ENCODE measurements at regions of chr2 and their contacts with region 1.

Region 1: DNA sequence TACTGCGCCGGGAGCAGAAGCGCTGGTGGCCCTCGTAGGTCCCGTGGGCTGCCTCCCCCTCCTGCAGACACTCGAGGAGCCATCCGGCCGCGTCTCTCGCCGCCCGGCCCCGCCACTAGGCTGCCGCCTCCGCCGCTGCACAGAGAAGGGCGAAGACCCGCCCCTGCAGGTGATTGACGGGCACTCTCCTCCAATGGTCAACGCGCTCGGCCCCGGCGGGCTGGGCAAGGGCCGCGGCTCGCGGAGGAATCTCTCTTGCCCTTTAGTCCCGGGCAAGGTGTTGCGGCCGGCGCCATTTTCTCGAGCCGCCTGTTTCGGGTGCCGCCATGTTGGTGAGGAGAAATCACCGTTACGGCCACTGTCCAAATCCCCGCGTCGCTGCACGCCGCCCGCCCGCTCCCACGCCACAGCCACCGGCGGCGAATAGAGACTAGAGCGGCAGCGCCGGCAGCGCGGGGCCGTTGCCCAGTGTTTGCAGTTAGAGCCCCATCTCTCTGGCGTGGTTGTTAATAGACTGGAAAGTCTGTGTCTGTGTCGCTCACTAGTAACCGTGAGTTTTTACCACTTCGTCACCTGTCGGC is at the start of gene ZC3H6:
- DNase-seq: peak; percentile 85
- ATAC-seq: peak; percentile 97
- H3K4me3 ChIP-seq: peak within 1 kb of the TSS; percentile 99
- H3K27ac ChIP-seq: peak within 1 kb of the TSS; percentile 94
- H3K4me1 ChIP-seq: no peaks in the 10 kb centered on the region
- H3K27me3 ChIP-seq: no peaks in the 10 kb centered on the region
- CTCF ChIP-seq: peak in 1 of 3 experiments; percentile 1; a peak in 1 of 6 replicates
- EP300 ChIP-seq: no peak
- POLR2A ChIP-seq: peak; percentile 95
- RAD21 ChIP-seq: no peak
- polyA plus RNA-seq, gene ZC3H6: 0.53 to 1.2 TPM

Region 2: GRCh38 chr2:111958901-111959300 is 316.5 kb before region 1 on chr2:
- CTCF ChIA-PET with region 1: no interaction called
- POLR2A ChIA-PET with region 1: no interaction called
- RAD21 ChIA-PET with region 1: no interaction called
- SMC1A ChIA-PET with region 1: no interaction called
- in situ Hi-C with region 1: no loop called
- intact Hi-C with region 1: no loop called
- DNase-seq: no peak
- ATAC-seq: no peak
- H3K4me3 ChIP-seq: no peak overlapping the region
- H3K27ac ChIP-seq: no peak overlapping the region
- H3K4me1 ChIP-seq: no peaks in the 10 kb centered on the region
- H3K27me3 ChIP-seq: no peaks in the 10 kb centered on the region; a peak in 1 of 4 replicates
- CTCF ChIP-seq: no peak
- EP300 ChIP-seq: no peak
- POLR2A ChIP-seq: no peak
- RAD21 ChIP-seq: no peak

Region 3: GRCh38 chr2:112187805-112188596 is 87.4 kb before region 1 on chr2:
- CTCF ChIA-PET with region 1: no interaction called
- POLR2A ChIA-PET with region 1: no interaction called
- RAD21 ChIA-PET with region 1: no interaction called
- SMC1A ChIA-PET with region 1: no interaction called
- in situ Hi-C with region 1: no loop called
- intact Hi-C with region 1: no loop called
- DNase-seq: no peak
- ATAC-seq: peak; percentile 48
- H3K4me3 ChIP-seq: no peak overlapping the region
- H3K27ac ChIP-seq: no peak overlapping the region
- H3K4me1 ChIP-seq: peaks cover 8% of the 10 kb centered on the region
- H3K27me3 ChIP-seq: no peaks in the 10 kb centered on the region; a peak in 2 of 4 replicates
- CTCF ChIP-seq: no peak
- EP300 ChIP-seq: no peak
- POLR2A ChIP-seq: no peak
- RAD21 ChIP-seq: no peak

Region 4: GRCh38 chr2:112259509-112260294 is 15.7 kb before region 1 on chr2:
- CTCF ChIA-PET with region 1: interaction called, 39 read pairs
- POLR2A ChIA-PET with region 1: interaction called, 4 read pairs
- RAD21 ChIA-PET with region 1: interaction called, 4 read pairs
- SMC1A ChIA-PET with region 1: interaction called, 6 read pairs
- in situ Hi-C with region 1: no loop called
- intact Hi-C with region 1: loop called (anchors 1 kb)
- DNase-seq: peak; percentile 35
- ATAC-seq: peak; percentile 70
- H3K4me3 ChIP-seq: no peak overlapping the region
- H3K27ac ChIP-seq: no peak overlapping the region
- H3K4me1 ChIP-seq: peaks cover 3% of the 10 kb centered on the region; the same call in 1 of the 2 replicates
- H3K27me3 ChIP-seq: no peaks in the 10 kb centered on the region
- CTCF ChIP-seq: peak; percentile 94 to 99 (median 99)
- EP300 ChIP-seq: no peak
- POLR2A ChIP-seq: 0 out of 2 replicates have a peak, but pooled peaks have one; percentile 27
- RAD21 ChIP-seq: peak; percentile 88

Region 5: DNA sequence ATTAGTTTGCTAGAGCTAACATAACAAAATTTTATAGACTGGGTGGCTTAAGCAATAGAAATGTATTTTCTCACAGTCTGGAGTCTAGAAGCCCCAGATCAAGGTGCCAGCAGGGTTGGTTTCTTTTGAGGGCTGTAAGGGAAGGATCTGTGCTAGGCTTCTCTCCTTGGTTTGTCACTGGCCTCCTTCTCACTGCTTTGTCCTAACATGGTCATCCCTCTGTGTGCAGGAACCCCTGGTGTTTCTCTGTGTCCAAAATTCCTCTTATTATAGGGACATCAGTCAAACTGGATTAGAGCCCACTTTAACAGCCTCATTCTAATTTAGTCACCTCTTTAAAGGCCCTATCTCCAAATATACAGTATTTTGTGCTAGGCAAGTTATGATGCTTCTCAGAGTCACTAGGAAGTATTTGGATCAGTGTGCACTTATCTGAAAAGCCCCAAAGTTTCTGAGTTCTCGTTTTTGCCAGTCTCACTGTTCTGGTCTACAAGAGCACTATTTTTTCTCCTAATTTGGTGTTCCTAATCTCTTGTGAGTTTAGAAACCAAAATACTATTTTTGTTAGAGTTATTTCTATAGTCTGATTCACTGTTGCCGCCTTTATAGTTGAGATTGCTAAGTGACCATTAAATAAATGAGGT is 29.0 kb after region 1 on chr2:
- CTCF ChIA-PET with region 1: no interaction called
- POLR2A ChIA-PET with region 1: no interaction called
- RAD21 ChIA-PET with region 1: no interaction called
- SMC1A ChIA-PET with region 1: no interaction called
- in situ Hi-C with region 1: no loop called
- intact Hi-C with region 1: loop called (anchors 2 kb)
- DNase-seq: peak; percentile 15
- ATAC-seq: peak; percentile 89
- H3K4me3 ChIP-seq: no peak overlapping the region
- H3K27ac ChIP-seq: peak overlapping the region; percentile 38; the same call in 1 of the 2 replicates
- H3K4me1 ChIP-seq: no peaks in the 10 kb centered on the region
- H3K27me3 ChIP-seq: no peaks in the 10 kb centered on the region
- CTCF ChIP-seq: no peak
- EP300 ChIP-seq: no peak
- POLR2A ChIP-seq: no peak
- RAD21 ChIP-seq: no peak

Region 6: DNA sequence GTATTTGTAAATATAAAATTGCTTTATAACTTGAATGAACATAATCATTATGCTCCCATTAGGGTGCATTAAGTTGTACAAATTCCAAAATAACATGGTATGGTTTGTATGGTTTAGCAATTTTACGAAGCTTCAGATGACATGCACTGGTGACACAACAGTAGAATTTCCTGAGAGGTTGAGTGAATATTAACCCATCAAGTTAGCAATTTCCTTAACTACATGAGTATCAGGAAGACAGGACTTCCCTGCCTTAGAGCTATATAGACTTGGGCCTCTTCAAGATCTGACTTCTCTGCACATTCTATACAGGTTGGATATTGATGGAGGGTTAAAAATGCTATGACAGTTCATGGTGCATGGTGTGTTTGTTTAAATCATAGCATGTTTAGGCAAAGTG is 60.2 kb after region 1 on chr2:
- CTCF ChIA-PET with region 1: no interaction called
- POLR2A ChIA-PET with region 1: no interaction called
- RAD21 ChIA-PET with region 1: no interaction called
- SMC1A ChIA-PET with region 1: no interaction called
- in situ Hi-C with region 1: no loop called
- intact Hi-C with region 1: no loop called
- DNase-seq: no peak
- ATAC-seq: no peak
- H3K4me3 ChIP-seq: no peak overlapping the region
- H3K27ac ChIP-seq: no peak overlapping the region
- H3K4me1 ChIP-seq: no peaks in the 10 kb centered on the region
- H3K27me3 ChIP-seq: no peaks in the 10 kb centered on the region
- CTCF ChIP-seq: no peak
- EP300 ChIP-seq: no peak
- POLR2A ChIP-seq: no peak
- RAD21 ChIP-seq: no peak

Region 7: GRCh38 chr2:112433932-112434730 is 158.7 kb after region 1 on chr2:
- CTCF ChIA-PET with region 1: no interaction called
- POLR2A ChIA-PET with region 1: no interaction called
- RAD21 ChIA-PET with region 1: no interaction called
- SMC1A ChIA-PET with region 1: no interaction called
- in situ Hi-C with region 1: no loop called
- intact Hi-C with region 1: loop called (anchors 5 kb)
- DNase-seq: no peak
- ATAC-seq: no peak
- H3K4me3 ChIP-seq: no peak overlapping the region
- H3K27ac ChIP-seq: no peak overlapping the region
- H3K4me1 ChIP-seq: no peaks in the 10 kb centered on the region
- H3K27me3 ChIP-seq: no peaks in the 10 kb centered on the region
- CTCF ChIP-seq: no peak
- EP300 ChIP-seq: no peak
- POLR2A ChIP-seq: no peak
- RAD21 ChIP-seq: no peak